Caco-2 (cell line): ENCODE measurements at regions of chr6 and their contacts with region 1.

Region 1: GRCh38 chr6:134015719-134016557 is 36.5 kb downstream of the SLC2A12 start:
- DNase-seq: no peak
- H3K4me3 ChIP-seq: no peak overlapping the region
- H3K4me3 Mint-ChIP-seq: no peak overlapping the region
- H3K27ac Mint-ChIP-seq: no peak overlapping the region
- H3K4me1 ChIP-seq: peaks cover 11% of the 10 kb centered on the region; the same call in 1 of the 2 replicates
- H3K4me1 Mint-ChIP-seq: no peaks in the 10 kb centered on the region
- H3K27me3 ChIP-seq: no peaks in the 10 kb centered on the region
- H3K27me3 Mint-ChIP-seq: no peaks in the 10 kb centered on the region
- CTCF ChIP-seq: no peak

Region 2: DNA sequence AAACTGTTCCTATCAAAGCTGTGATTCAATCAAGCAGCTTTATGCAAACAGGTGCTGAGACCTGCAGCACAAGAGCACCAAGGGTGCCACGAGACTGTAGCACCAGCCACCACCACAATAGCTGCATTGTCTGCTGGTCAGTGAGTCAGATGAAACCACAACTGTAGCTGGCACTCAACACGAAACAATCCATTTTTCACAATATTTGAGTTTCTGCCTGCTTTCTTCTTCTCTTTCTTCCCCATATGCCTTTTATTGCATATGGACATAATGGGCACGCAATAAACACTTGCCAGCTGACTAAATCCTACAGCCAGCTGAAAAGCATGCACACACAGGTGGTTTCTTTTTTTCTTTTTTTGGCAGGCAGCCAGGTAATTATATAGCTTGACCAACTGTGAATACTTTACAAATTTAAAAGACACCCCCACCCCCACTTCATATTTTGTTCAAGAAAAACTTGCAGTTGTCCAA is 19.9 kb after region 1 on chr6:
- CTCF ChIA-PET with region 1: no interaction called
- POLR2A ChIA-PET with region 1: no interaction called
- intact Hi-C with region 1: no loop called
- DNase-seq: no peak
- H3K4me3 ChIP-seq: no peak overlapping the region
- H3K4me3 Mint-ChIP-seq: no peak overlapping the region
- H3K27ac Mint-ChIP-seq: no peak overlapping the region
- H3K4me1 ChIP-seq: no peaks in the 10 kb centered on the region
- H3K4me1 Mint-ChIP-seq: no peaks in the 10 kb centered on the region
- H3K27me3 ChIP-seq: no peaks in the 10 kb centered on the region
- H3K27me3 Mint-ChIP-seq: peaks cover 3% of the 10 kb centered on the region
- CTCF ChIP-seq: no peak

Region 3: DNA sequence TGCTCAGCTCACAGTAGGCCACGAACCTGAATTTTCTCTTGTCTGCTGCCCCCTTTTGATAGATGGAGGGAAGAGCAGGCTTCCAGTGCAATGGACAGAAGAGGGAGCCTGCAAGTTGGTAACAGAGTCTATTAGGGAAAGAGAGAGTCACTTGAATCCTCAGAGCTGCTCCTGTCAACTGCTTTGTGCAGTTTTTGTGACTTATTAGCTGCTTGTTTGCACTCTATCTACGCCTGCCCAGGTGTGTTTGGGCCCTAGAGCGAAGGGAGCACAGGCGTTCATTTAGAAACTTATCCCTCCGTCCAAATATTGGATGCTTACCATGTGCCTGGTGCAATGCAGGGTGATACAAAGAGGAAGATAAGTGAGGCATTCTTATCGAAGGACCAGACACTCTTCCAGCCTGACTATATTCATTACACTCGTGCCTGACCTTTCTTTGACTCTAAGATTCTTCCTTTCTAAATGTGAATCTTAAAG is 48.1 kb after region 1 on chr6:
- CTCF ChIA-PET with region 1: interaction called, 3 read pairs
- POLR2A ChIA-PET with region 1: no interaction called
- intact Hi-C with region 1: loop called (anchors 5 kb)
- DNase-seq: peak; percentile 70 to 77
- H3K4me3 ChIP-seq: no peak overlapping the region
- H3K4me3 Mint-ChIP-seq: no peak overlapping the region
- H3K27ac Mint-ChIP-seq: no peak overlapping the region
- H3K4me1 ChIP-seq: peaks cover 10% of the 10 kb centered on the region
- H3K4me1 Mint-ChIP-seq: peaks cover 11% of the 10 kb centered on the region
- H3K27me3 ChIP-seq: no peaks in the 10 kb centered on the region
- H3K27me3 Mint-ChIP-seq: no peaks in the 10 kb centered on the region
- CTCF ChIP-seq: peak; percentile 83 to 94

Region 4: DNA sequence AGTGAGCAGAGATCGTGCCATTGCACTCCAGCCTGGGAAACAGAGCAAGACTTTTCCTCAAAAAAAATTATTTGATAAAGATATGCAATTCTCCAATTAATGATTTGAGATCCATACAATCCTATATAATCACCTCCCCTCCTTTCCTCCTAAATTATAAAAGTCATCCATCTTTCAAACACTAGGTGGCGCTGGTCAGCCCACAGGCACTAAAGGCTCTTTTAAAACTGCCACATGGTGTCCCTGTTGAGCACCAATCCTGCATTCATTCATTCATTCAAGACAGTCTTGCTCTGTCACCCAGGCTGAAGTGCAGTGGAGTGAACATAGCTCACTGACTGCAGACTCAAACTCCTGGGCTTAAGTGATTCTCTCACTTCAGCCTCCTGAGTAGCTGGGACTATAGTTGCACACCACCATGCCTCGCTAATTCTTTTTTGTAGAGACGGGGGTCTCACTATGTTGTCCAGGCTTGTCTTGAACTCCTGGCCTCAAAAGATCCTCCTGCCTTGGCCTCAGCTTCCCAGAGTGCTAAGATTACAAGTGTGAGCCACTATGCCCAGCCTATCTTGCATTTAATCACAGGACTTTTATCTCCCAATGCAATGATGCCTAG is 95.2 kb after region 1 on chr6:
- CTCF ChIA-PET with region 1: no interaction called
- POLR2A ChIA-PET with region 1: no interaction called
- intact Hi-C with region 1: no loop called
- DNase-seq: peak in 1 of 2 experiments; percentile 58
- H3K4me3 ChIP-seq: no peak overlapping the region
- H3K4me3 Mint-ChIP-seq: no peak overlapping the region
- H3K27ac Mint-ChIP-seq: no peak overlapping the region
- H3K4me1 ChIP-seq: peaks cover under 1% of the 10 kb centered on the region; the same call in 1 of the 2 replicates
- H3K4me1 Mint-ChIP-seq: no peaks in the 10 kb centered on the region
- H3K27me3 ChIP-seq: no peaks in the 10 kb centered on the region
- H3K27me3 Mint-ChIP-seq: peaks cover 3% of the 10 kb centered on the region
- CTCF ChIP-seq: peak; percentile 75 to 80